ENCODE measurements at regions of chr15 and their contacts with region 1.

Region 1: DNA sequence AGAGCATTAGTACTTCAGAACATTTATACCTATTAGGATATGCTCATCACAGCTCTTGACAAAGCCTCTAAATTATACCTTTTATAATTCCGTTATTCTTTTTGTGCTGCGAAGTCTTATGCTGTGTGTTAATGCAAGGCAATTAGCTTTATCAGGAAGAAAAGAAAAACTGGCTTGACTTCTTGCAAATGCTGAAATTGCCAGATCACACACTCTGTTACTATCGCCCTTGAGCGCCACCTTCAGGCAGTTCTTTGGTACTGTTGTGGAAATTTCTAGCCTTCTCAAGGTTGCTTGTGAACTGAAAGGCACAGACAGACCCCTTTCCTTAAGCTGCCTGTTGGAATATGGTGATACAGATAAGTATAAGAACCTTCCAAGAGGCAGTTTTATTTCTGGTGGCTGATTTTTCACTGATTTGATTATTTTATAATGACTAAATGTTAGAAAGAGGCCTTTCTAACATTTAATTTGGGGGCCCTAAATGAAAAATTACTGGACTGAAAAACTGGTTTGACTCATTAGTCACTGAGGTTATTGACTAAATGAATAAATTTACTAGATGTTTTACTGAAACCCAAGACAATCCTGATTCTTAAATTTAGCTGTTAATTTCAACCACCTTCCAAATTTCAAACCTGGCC is 126.2 kb upstream of the RASGRP1 start:
- DNase-seq: peak; percentile 82
- ATAC-seq: peak; percentile 86
- H3K4me3 ChIP-seq: no peak overlapping the region
- H3K4me3 Mint-ChIP-seq: no peak overlapping the region
- H3K27ac ChIP-seq: no peak overlapping the region
- H3K27ac Mint-ChIP-seq: no peak overlapping the region
- H3K4me1 ChIP-seq: peaks cover 0 to 3% of the 10 kb centered on the region in 2 donors
- H3K4me1 Mint-ChIP-seq: peaks cover 12% of the 10 kb centered on the region
- H3K27me3 ChIP-seq: no peaks in the 10 kb centered on the region
- H3K27me3 Mint-ChIP-seq: no peaks in the 10 kb centered on the region
- CTCF ChIP-seq: peak; percentile 94

Region 2: GRCh38 chr15:38129531-38130204 is 561.1 kb before region 1 on chr15:
- CTCF ChIA-PET with region 1: no interaction called
- POLR2A ChIA-PET with region 1: no interaction called
- intact Hi-C with region 1: no loop called
- DNase-seq: peak; percentile 23
- ATAC-seq: peak; percentile 47
- H3K4me3 ChIP-seq: peak overlapping the region in 3 of 5 experiments; percentile 10 to 28 (median 14)
- H3K4me3 Mint-ChIP-seq: peak overlapping the region; percentile 73
- H3K27ac ChIP-seq: no peak overlapping the region
- H3K27ac Mint-ChIP-seq: no peak overlapping the region
- H3K4me1 ChIP-seq: peaks cover 13 to 16% of the 10 kb centered on the region in 2 donors
- H3K4me1 Mint-ChIP-seq: peaks cover 20% of the 10 kb centered on the region
- H3K27me3 ChIP-seq: peaks cover 0 to 2% (median 0%) of the 10 kb centered on the region in 4 experiments
- H3K27me3 Mint-ChIP-seq: peaks cover 3% of the 10 kb centered on the region
- CTCF ChIP-seq: no peak

Region 3: DNA sequence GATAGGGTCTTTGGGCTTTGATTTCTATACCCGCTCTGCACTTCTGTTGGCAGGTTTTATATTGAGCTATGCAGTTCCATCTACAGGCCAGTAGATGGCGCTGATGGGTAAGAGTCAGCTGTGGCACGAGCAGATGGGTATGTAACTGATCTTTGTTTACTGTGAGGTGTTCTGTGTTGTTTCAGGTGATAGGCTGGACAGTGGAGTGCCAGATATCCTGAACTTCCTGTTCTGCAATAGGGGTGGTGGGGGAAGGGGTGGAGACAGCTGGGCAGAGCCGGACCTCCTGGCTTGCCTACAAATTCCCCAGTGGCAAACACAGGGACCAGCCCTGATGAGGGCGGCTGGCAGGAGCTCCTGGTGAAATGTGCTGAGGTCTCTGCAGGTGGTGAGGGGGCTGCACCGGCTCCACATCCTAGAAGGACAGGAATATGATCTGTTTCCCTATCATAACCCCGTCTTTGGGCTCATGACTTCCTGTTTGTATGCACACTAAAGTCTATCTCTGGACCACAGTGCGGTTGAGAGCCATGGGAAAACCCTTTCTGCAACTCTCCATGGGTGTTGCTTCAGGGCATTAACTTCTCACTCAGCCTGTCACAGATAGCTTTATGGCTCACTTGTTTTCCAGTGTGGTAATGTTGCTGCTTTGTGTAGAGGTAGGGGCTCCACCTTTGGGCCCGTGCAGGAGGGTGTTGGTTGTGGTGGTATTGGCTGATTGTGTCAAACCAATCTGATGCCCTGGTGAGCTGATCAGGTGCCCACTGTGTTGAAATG is 250.3 kb before region 1 on chr15:
- CTCF ChIA-PET with region 1: interaction called, 222 read pairs
- POLR2A ChIA-PET with region 1: no interaction called
- intact Hi-C with region 1: loop called (anchors 1 kb)
- DNase-seq: peak; percentile 76
- ATAC-seq: peak; percentile 95
- H3K4me3 ChIP-seq: no peak overlapping the region
- H3K4me3 Mint-ChIP-seq: no peak overlapping the region
- H3K27ac ChIP-seq: no peak overlapping the region
- H3K27ac Mint-ChIP-seq: no peak overlapping the region
- H3K4me1 ChIP-seq: peaks cover 0 to 5% of the 10 kb centered on the region in 2 donors
- H3K4me1 Mint-ChIP-seq: peaks cover 2% of the 10 kb centered on the region
- H3K27me3 ChIP-seq: peaks cover 0 to 2% (median 0%) of the 10 kb centered on the region in 4 experiments
- H3K27me3 Mint-ChIP-seq: peaks cover 39% of the 10 kb centered on the region
- CTCF ChIP-seq: peak; percentile 97

Region 4: DNA sequence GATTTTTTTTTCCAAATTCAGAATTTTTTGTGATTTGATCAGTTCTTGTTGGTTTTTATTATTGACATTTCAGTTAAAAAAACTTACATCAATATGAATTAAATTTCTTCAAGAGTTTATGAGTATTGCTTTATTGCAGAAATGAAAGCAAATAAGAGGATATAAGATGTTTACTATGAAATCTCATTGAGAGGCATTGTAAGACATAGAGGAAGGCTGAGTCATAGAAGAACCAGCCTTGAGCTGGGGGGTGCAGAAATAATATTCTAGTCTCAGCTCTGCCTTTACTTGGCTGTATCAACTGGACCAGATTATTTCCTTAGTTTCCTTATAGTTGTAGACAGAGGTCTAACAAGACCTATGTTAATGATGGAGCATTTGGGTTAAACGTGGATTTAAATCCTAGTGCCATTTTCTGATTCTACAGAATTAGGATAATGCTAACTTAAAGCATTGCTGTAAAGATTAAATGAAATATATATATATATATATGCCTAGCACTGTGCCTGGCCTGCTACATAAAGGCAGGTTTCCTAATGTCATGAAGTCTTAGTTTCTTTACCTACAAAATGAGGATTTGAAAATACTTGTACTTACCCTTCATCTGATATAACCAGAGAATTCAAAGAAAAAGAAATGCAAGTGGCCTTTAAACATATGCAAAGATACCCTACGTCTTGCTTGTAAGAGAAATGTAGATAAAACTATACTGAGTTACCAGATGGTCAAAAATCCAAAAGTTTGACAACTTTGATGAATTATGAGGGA is 229.6 kb before region 1 on chr15:
- CTCF ChIA-PET with region 1: interaction called, 12 read pairs
- POLR2A ChIA-PET with region 1: no interaction called
- intact Hi-C with region 1: no loop called
- DNase-seq: no peak
- ATAC-seq: peak; percentile 41
- H3K4me3 ChIP-seq: no peak overlapping the region
- H3K4me3 Mint-ChIP-seq: no peak overlapping the region
- H3K27ac ChIP-seq: no peak overlapping the region
- H3K27ac Mint-ChIP-seq: no peak overlapping the region
- H3K4me1 ChIP-seq: peaks cover 0 to 7% of the 10 kb centered on the region in 2 donors
- H3K4me1 Mint-ChIP-seq: peaks cover 30% of the 10 kb centered on the region
- H3K27me3 ChIP-seq: no peaks in the 10 kb centered on the region
- H3K27me3 Mint-ChIP-seq: no peaks in the 10 kb centered on the region
- CTCF ChIP-seq: no peak

Region 5: GRCh38 chr15:38490242-38490922 is 200.4 kb before region 1 on chr15:
- CTCF ChIA-PET with region 1: interaction called, 10 read pairs
- POLR2A ChIA-PET with region 1: no interaction called
- intact Hi-C with region 1: no loop called
- DNase-seq: no peak
- ATAC-seq: no peak
- H3K4me3 ChIP-seq: no peak overlapping the region
- H3K4me3 Mint-ChIP-seq: no peak overlapping the region
- H3K27ac ChIP-seq: no peak overlapping the region
- H3K27ac Mint-ChIP-seq: no peak overlapping the region
- H3K4me1 ChIP-seq: no peaks in the 10 kb centered on the region
- H3K4me1 Mint-ChIP-seq: no peaks in the 10 kb centered on the region
- H3K27me3 ChIP-seq: no peaks in the 10 kb centered on the region
- H3K27me3 Mint-ChIP-seq: no peaks in the 10 kb centered on the region
- CTCF ChIP-seq: no peak

Region 6: DNA sequence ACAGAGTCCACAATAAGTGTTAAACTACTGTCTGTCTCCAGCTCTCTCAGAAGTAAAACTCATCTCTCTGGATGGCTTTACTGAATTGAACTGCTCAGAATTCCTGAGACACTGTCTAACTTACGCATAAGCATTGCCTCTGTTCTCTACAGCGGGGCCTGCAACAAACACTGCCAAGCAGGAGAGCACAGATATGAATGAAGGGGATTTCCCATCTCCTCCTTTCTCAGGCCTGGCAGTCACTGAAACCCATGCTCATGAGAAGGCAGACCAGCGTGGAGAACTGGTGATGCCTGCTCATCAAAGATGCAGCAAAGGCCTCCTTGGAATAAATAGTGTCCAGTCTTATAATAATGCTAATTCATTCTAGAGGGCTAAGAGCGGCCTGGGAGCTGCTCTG is 136.5 kb before region 1 on chr15:
- CTCF ChIA-PET with region 1: interaction called, 546 read pairs
- POLR2A ChIA-PET with region 1: no interaction called
- intact Hi-C with region 1: no loop called
- DNase-seq: no peak
- ATAC-seq: no peak
- H3K4me3 ChIP-seq: no peak overlapping the region
- H3K4me3 Mint-ChIP-seq: no peak overlapping the region
- H3K27ac ChIP-seq: no peak overlapping the region
- H3K27ac Mint-ChIP-seq: no peak overlapping the region
- H3K4me1 ChIP-seq: peaks cover 35 to 40% of the 10 kb centered on the region in 2 donors
- H3K4me1 Mint-ChIP-seq: peaks cover 60% of the 10 kb centered on the region
- H3K27me3 ChIP-seq: no peaks in the 10 kb centered on the region
- H3K27me3 Mint-ChIP-seq: no peaks in the 10 kb centered on the region
- CTCF ChIP-seq: no peak

Region 7: GRCh38 chr15:38707802-38708671 is 17.2 kb after region 1 on chr15:
- CTCF ChIA-PET with region 1: interaction called, 39 read pairs
- POLR2A ChIA-PET with region 1: no interaction called
- intact Hi-C with region 1: no loop called
- DNase-seq: peak; percentile 37
- ATAC-seq: peak; percentile 39
- H3K4me3 ChIP-seq: no peak overlapping the region
- H3K4me3 Mint-ChIP-seq: no peak overlapping the region
- H3K27ac ChIP-seq: no peak overlapping the region
- H3K27ac Mint-ChIP-seq: no peak overlapping the region
- H3K4me1 ChIP-seq: no peaks in the 10 kb centered on the region
- H3K4me1 Mint-ChIP-seq: no peaks in the 10 kb centered on the region
- H3K27me3 ChIP-seq: peaks cover 0 to 4% (median 1%) of the 10 kb centered on the region in 4 experiments
- H3K27me3 Mint-ChIP-seq: peaks cover 33% of the 10 kb centered on the region
- CTCF ChIP-seq: peak; percentile 71

Region 8: DNA sequence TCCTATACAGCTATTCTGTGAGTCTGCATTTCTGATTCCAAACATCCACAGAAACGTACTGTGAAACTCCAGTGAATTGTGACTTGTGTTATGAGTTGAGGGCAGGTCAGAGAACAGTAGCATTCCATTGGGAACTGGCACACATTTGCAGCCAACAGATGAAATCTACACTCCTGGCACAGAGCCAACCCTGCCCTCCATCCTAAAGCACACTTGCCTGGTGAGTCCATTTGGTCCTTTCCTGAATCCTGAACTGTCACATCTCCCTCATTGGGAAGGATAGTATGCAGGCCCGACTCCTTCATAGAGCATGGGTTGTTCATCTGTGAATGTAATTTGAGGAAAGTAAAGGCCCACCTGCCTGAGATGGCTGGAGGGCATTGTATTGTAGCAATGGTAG is 188.1 kb after region 1 on chr15:
- CTCF ChIA-PET with region 1: no interaction called
- POLR2A ChIA-PET with region 1: no interaction called
- intact Hi-C with region 1: no loop called
- DNase-seq: no peak
- ATAC-seq: no peak
- H3K4me3 ChIP-seq: no peak overlapping the region
- H3K4me3 Mint-ChIP-seq: no peak overlapping the region
- H3K27ac ChIP-seq: no peak overlapping the region
- H3K27ac Mint-ChIP-seq: no peak overlapping the region
- H3K4me1 ChIP-seq: no peaks in the 10 kb centered on the region
- H3K4me1 Mint-ChIP-seq: no peaks in the 10 kb centered on the region
- H3K27me3 ChIP-seq: no peaks in the 10 kb centered on the region
- H3K27me3 Mint-ChIP-seq: peaks cover 8% of the 10 kb centered on the region
- CTCF ChIP-seq: no peak

Region 9: GRCh38 chr15:38961931-38962330 is 271.1 kb after region 1 on chr15:
- CTCF ChIA-PET with region 1: no interaction called
- POLR2A ChIA-PET with region 1: no interaction called
- intact Hi-C with region 1: no loop called
- DNase-seq: no peak
- ATAC-seq: no peak
- H3K4me3 ChIP-seq: no peak overlapping the region
- H3K4me3 Mint-ChIP-seq: no peak overlapping the region
- H3K27ac ChIP-seq: no peak overlapping the region
- H3K27ac Mint-ChIP-seq: no peak overlapping the region
- H3K4me1 ChIP-seq: no peaks in the 10 kb centered on the region
- H3K4me1 Mint-ChIP-seq: no peaks in the 10 kb centered on the region
- H3K27me3 ChIP-seq: no peaks in the 10 kb centered on the region
- H3K27me3 Mint-ChIP-seq: no peaks in the 10 kb centered on the region
- CTCF ChIP-seq: no peak